Transverse colon (tissue), 4 donors: ENCODE measurements at regions of chr11 and their contacts with region 1.

Region 1: DNA sequence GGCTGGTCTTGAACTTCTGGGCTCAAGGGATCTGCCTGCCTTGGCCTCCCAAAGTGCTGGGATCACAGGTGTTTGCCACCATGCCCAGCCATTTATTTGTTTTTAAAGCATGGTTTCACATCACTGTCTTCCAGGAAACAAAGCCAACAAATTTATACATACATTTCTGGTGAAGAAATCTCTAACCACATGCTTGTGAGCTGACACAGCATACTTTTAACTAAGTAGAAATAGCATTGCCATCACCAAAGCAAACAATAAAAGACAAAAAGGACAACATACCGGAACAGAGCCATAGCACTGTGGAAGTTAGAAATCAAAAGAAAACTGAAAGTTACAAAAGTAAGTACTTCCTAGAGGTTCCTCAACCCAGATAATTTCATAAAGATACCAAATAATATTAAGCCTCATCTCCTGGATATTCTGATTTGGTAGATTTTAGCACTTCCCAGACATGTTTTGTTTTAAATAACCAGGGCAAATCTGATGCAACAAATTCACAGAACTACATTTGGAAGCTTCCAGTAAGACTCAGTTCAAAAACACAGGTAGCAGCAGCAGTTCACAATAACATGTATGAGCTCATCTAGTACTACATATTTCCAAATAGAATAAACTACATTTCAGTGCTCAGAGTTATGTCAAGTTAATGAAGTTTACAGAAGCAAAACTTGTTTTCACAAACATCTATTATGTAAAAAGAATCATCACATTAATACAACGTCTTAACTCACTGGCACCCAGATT is 70.6 kb downstream of the RRAS2 start:
- DNase-seq: no peak
- H3K4me3 ChIP-seq: no peak overlapping the region
- H3K27ac ChIP-seq: peak overlapping the region in 2 of 4 donors; percentile 23 to 54
- H3K4me1 ChIP-seq: peaks cover 0 to 6% (median 0%) of the 10 kb centered on the region in 4 donors
- H3K27me3 ChIP-seq: no peaks in the 10 kb centered on the region
- CTCF ChIP-seq: no peak
- EP300 ChIP-seq: no peak
- POLR2A ChIP-seq: no peak

Region 2: GRCh38 chr11:14258221-14258935 is 30.0 kb before region 1 on chr11:
- in situ Hi-C with region 1: no loop called
- intact Hi-C with region 1: no loop called
- DNase-seq: peak; percentile 60
- H3K4me3 ChIP-seq: no peak overlapping the region
- H3K27ac ChIP-seq: peak overlapping the region; percentile 55 to 75 (median 71)
- H3K4me1 ChIP-seq: peaks cover 0 to 31% (median 15%) of the 10 kb centered on the region in 4 donors
- H3K27me3 ChIP-seq: no peaks in the 10 kb centered on the region
- CTCF ChIP-seq: no peak
- EP300 ChIP-seq: no peak
- POLR2A ChIP-seq: peak; percentile 51

Region 3: GRCh38 chr11:14422052-14422813 is 133.9 kb after region 1 on chr11:
- in situ Hi-C with region 1: loop called in 1 of 4 experiments (anchors 25 kb)
- intact Hi-C with region 1: no loop called
- DNase-seq: peak; percentile 66
- H3K4me3 ChIP-seq: no peak overlapping the region
- H3K27ac ChIP-seq: peak overlapping the region; percentile 20 to 52 (median 36)
- H3K4me1 ChIP-seq: peaks cover 4 to 16% (median 9%) of the 10 kb centered on the region in 4 donors
- H3K27me3 ChIP-seq: no peaks in the 10 kb centered on the region
- CTCF ChIP-seq: no peak
- EP300 ChIP-seq: no peak
- POLR2A ChIP-seq: no peak